Naive thymus-derived CD4-positive, alpha-beta T cell (primary cell): ENCODE measurements at regions of chr7 and their contacts with region 1.

Region 1: DNA sequence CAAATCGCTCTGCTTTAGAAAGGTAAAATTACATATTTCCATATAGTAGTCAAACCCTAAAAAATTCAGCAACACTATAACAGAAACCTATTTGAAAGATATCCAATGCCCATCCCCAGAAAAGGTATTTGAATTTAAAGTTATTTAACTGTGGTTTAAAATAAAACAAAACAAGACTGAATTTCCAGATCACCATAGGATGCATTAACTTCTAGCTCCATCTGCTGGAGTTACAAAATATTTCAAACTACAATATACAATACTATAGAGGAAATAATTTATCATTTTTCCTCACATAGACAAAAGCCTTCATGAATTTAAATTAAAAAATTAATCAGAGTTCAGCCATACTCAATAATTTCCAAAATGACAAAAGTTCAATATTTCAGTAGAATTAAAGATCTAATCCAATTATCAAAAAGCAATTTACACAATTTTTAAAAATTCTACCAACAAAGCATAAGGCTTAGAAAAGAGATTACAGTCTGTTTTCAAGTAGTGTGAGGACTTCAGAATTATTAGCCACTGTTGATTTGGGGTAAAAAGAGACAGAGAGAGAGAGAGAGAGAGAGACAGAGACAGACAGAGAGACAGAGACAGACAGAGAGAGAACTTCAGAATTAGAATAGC is 75.9 kb downstream of the LMBR1 start:
- DNase-seq: peak in 1 of 9 donors; percentile 5
- ATAC-seq: no peak
- H3K4me3 ChIP-seq: no peak overlapping the region
- H3K4me3 Mint-ChIP-seq: no peak overlapping the region
- H3K27ac ChIP-seq: no peak overlapping the region
- H3K27ac Mint-ChIP-seq: no peak overlapping the region
- H3K4me1 ChIP-seq: no peaks in the 10 kb centered on the region
- H3K4me1 Mint-ChIP-seq: peaks cover 0 to 2% (median 0%) of the 10 kb centered on the region in 7 donors
- H3K27me3 ChIP-seq: no peaks in the 10 kb centered on the region
- H3K27me3 Mint-ChIP-seq: no peaks in the 10 kb centered on the region

Region 2: DNA sequence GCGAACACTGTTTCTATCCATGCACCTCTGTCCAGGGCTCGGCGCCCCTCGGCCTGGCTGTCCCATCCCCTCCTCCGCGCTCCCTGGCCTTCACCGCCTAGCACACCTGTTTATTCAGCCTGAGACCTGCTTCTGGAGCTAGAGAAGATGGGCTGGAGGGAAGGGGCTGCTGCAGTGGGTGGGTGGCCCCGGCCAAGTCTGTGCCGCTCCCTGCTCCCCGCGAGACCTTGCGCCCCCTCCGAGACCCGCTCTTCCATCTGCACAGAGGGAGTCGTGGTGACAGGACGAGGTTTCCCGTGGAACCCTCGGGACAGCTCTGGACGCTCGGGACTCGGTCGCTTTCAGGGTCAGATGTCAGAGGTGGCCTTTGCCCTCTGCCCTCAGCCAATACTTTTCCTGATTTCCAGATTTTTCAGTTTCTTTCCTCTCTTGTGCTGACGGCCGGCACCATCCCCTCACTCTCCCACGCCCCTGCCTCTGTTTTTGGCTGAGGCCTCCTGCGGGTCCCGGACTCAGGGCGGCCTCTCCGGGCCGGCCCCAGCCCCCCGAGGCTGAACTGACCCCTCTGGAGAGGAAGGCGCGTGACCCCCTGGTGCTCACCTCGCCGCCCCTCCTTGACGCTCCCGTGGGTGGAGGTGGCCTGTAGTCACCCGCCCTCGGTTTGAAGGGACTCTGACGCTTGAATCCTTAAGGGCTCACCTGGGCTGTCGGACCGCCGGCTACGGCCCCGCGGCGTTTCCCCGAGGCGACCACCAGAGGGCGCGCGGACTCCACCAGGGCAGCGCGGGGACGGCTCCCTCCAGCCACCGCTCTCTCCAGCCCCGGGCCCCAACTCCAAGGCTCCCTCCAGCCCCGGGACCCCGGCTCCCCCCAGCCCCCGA is 1020.4 kb before region 1 on chr7:
- CTCF ChIA-PET with region 1: no interaction called
- POLR2A ChIA-PET with region 1: interaction called, 3 read pairs
- intact Hi-C with region 1: loop called (anchors 1 to 5 kb)
- DNase-seq: peak; percentile 23 to 80 (median 54)
- ATAC-seq: peak; percentile 79
- H3K4me3 ChIP-seq: no peak overlapping the region
- H3K4me3 Mint-ChIP-seq: no peak overlapping the region
- H3K27ac ChIP-seq: no peak overlapping the region
- H3K27ac Mint-ChIP-seq: no peak overlapping the region
- H3K4me1 ChIP-seq: no peaks in the 10 kb centered on the region
- H3K4me1 Mint-ChIP-seq: peaks cover 0 to 12% (median 8%) of the 10 kb centered on the region in 7 donors
- H3K27me3 ChIP-seq: peaks cover 0 to 3% of the 10 kb centered on the region in 2 donors
- H3K27me3 Mint-ChIP-seq: peaks cover 28 to 45% (median 33%) of the 10 kb centered on the region in 5 donors

Region 3: GRCh38 chr7:155815332-155816191 is 1001.5 kb before region 1 on chr7:
- CTCF ChIA-PET with region 1: interaction called, 4 read pairs
- POLR2A ChIA-PET with region 1: no interaction called
- intact Hi-C with region 1: loop called in 1 of 2 experiments (anchors 1 kb)
- DNase-seq: peak; percentile 33 to 81 (median 52)
- ATAC-seq: peak; percentile 77
- H3K4me3 ChIP-seq: no peak overlapping the region
- H3K4me3 Mint-ChIP-seq: peak overlapping the region in 4 of 10 donors; percentile 13 to 41 (median 30)
- H3K27ac ChIP-seq: no peak overlapping the region
- H3K27ac Mint-ChIP-seq: peak overlapping the region in 1 of 9 donors; percentile 19
- H3K4me1 ChIP-seq: no peaks in the 10 kb centered on the region
- H3K4me1 Mint-ChIP-seq: peaks cover 13 to 21% (median 16%) of the 10 kb centered on the region in 7 donors
- H3K27me3 ChIP-seq: peaks cover 0 to 9% of the 10 kb centered on the region in 2 donors
- H3K27me3 Mint-ChIP-seq: peaks cover 38 to 51% (median 40%) of the 10 kb centered on the region in 5 donors

Region 4: DNA sequence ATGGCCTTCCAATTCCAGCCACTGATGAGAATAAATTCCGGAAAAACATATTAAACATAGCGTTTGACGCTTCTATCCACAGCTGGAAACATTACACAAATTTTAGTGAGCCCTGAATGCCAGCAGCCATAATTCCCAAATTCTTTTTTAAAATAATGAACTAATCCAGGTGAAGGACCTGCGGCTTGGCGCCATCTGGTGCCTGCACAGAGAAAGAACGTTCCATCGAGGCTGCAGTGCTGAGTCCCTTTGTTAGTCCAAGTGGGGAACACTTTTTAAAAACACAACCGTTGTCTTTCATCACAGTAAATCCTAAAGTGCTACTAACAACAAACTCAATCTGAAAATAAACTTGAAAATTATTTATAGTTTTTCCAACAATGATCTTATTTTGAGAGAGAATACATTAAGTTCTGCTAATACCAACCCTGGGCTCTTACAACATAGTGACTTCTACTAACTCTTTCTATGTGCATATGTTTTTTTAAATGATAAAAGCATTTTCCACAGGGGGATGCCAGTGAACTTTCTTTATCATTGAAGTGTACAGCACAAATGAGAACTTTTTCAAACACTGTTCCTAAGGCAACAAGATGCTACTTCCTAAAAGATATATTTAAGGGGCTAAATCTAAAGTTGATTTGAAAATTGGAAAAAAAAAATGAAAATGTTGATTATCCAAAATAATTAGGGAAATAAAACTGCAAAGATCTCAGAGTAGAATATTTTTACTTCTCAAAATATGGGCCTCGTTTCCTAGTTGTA is 343.4 kb before region 1 on chr7:
- CTCF ChIA-PET with region 1: no interaction called
- POLR2A ChIA-PET with region 1: no interaction called
- intact Hi-C with region 1: loop called in 1 of 2 experiments (anchors 5 kb)
- DNase-seq: peak in 2 of 9 donors; percentile 8 to 9
- ATAC-seq: no peak
- H3K4me3 ChIP-seq: no peak overlapping the region
- H3K4me3 Mint-ChIP-seq: no peak overlapping the region
- H3K27ac ChIP-seq: no peak overlapping the region
- H3K27ac Mint-ChIP-seq: no peak overlapping the region
- H3K4me1 ChIP-seq: no peaks in the 10 kb centered on the region
- H3K4me1 Mint-ChIP-seq: no peaks in the 10 kb centered on the region
- H3K27me3 ChIP-seq: no peaks in the 10 kb centered on the region
- H3K27me3 Mint-ChIP-seq: peaks cover 21 to 50% (median 27%) of the 10 kb centered on the region in 5 donors

Region 5: GRCh38 chr7:156544919-156545723 is 271.9 kb before region 1 on chr7:
- CTCF ChIA-PET with region 1: no interaction called
- POLR2A ChIA-PET with region 1: no interaction called
- intact Hi-C with region 1: loop called in 1 of 2 experiments (anchors 5 kb)
- DNase-seq: no peak
- ATAC-seq: no peak
- H3K4me3 ChIP-seq: no peak overlapping the region
- H3K4me3 Mint-ChIP-seq: no peak overlapping the region
- H3K27ac ChIP-seq: no peak overlapping the region
- H3K27ac Mint-ChIP-seq: no peak overlapping the region
- H3K4me1 ChIP-seq: no peaks in the 10 kb centered on the region
- H3K4me1 Mint-ChIP-seq: no peaks in the 10 kb centered on the region
- H3K27me3 ChIP-seq: no peaks in the 10 kb centered on the region
- H3K27me3 Mint-ChIP-seq: peaks cover 6 to 29% (median 25%) of the 10 kb centered on the region in 5 donors

Region 6: GRCh38 chr7:156777364-156778069 is 39.5 kb before region 1 on chr7:
- CTCF ChIA-PET with region 1: no interaction called
- POLR2A ChIA-PET with region 1: no interaction called
- intact Hi-C with region 1: loop called in 1 of 2 experiments (anchors 2 kb)
- DNase-seq: peak in 1 of 9 donors; percentile 47
- ATAC-seq: no peak
- H3K4me3 ChIP-seq: no peak overlapping the region
- H3K4me3 Mint-ChIP-seq: peak overlapping the region in 1 of 10 donors; percentile 63
- H3K27ac ChIP-seq: no peak overlapping the region
- H3K27ac Mint-ChIP-seq: peak overlapping the region in 3 of 9 donors; percentile 14 to 91 (median 17)
- H3K4me1 ChIP-seq: no peaks in the 10 kb centered on the region
- H3K4me1 Mint-ChIP-seq: peaks cover 0 to 39% (median 14%) of the 10 kb centered on the region in 7 donors
- H3K27me3 ChIP-seq: no peaks in the 10 kb centered on the region
- H3K27me3 Mint-ChIP-seq: no peaks in the 10 kb centered on the region